ENCODE measurements at regions of chr7 and their contacts with region 1.

Region 1: DNA sequence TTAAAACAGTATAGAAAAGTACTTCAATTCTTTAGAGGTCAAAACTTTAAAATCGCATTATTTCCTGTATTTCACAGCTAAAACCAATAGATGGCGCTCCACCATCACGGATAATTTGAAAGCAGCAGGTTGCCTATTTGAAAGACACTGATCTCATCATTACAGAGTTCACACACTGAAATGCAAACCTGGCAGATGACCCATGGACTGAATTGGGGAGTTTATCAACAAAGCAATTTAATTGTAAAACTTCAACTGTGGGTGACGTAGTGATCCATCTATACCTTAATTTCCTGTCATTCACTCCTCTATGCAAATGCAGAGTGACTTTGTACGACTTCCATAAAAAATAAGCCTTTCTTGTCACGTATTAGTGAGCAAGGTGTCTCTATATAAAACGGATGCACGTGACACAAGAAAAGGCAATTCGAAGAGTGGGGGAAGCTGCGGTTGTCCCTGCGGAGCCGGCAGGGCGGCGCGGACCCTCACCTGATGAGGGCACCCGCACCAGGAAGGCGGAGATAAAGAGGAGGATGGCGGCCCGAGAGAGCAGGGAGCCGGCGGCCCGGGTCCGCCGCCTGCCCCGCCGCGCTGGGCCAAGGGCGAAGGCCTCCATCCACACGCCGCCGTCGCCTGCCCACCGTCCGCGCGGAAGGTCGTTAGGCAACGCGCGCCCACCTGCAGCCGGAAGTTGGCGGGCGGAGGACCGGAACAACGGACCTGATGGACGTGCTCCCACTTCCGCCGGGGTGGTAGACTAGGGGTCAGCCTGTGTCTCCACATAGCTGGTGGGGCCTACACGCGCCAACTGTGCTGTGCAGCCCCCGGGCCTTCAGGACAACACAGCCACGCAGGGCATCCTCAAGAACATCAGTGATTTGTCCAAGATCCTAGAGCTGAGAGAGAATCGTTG is at the start of gene ZPBP:
- DNase-seq: peak; percentile 7
- ATAC-seq: peak; percentile 42
- H3K4me3 ChIP-seq: no peak within 1 kb of the TSS
- H3K27ac ChIP-seq: no peak within 1 kb of the TSS
- H3K4me1 ChIP-seq: no peaks in the 10 kb centered on the region
- H3K27me3 ChIP-seq: no peaks in the 10 kb centered on the region
- CTCF ChIP-seq: peak; percentile 45 to 83 (median 62); a peak in 5 of 6 replicates
- POLR2A ChIP-seq: no peak
- RAD21 ChIP-seq: peak; percentile 80
- total RNA-seq, gene ZPBP: not detected

Region 2: DNA sequence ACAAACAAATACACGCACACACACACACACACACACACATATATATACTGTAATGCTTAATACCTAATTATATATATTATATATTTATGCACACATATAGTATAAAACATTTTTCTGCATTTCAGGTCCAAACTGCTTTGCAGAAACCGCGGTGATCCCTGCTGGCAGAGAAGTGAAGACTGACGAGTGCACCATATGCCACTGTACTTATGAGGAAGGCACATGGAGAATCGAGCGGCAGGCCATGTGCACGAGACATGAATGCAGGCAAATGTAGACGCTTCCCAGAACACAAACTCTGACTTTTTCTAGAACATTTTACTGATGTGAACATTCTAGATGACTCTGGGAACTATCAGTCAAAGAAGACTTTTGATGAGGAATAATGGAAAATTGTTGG is 180.9 kb before region 1 on chr7:
- CTCF ChIA-PET with region 1: no interaction called
- POLR2A ChIA-PET with region 1: no interaction called
- RAD21 ChIA-PET with region 1: no interaction called
- intact Hi-C with region 1: no loop called
- DNase-seq: no peak
- ATAC-seq: no peak
- H3K4me3 ChIP-seq: no peak overlapping the region
- H3K27ac ChIP-seq: no peak overlapping the region
- H3K4me1 ChIP-seq: no peaks in the 10 kb centered on the region
- H3K27me3 ChIP-seq: no peaks in the 10 kb centered on the region
- CTCF ChIP-seq: no peak
- POLR2A ChIP-seq: no peak
- RAD21 ChIP-seq: no peak

Region 3: DNA sequence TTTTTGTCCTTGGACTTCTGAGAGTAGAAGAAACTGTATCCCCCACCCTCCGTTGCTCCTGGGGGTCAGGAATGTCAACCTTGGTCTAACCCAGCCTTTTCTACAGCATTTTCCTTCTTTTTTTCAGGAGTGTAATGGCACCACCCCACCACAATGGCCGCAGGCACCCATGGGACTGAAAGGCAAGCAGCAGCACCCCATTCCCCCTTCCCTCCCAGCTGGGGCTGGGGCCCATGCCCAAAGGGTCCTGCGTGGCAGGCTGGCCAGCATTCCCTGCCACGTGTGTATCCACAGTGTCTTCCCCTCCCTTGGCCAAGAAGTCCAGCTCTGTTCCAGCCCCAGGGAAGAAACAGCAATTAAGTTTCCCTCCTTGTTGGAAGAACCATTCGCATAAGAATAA is 106.6 kb before region 1 on chr7:
- CTCF ChIA-PET with region 1: no interaction called
- POLR2A ChIA-PET with region 1: no interaction called
- RAD21 ChIA-PET with region 1: no interaction called
- intact Hi-C with region 1: no loop called
- DNase-seq: no peak
- ATAC-seq: no peak
- H3K4me3 ChIP-seq: no peak overlapping the region
- H3K27ac ChIP-seq: no peak overlapping the region
- H3K4me1 ChIP-seq: no peaks in the 10 kb centered on the region
- H3K27me3 ChIP-seq: no peaks in the 10 kb centered on the region
- CTCF ChIP-seq: no peak
- POLR2A ChIP-seq: no peak
- RAD21 ChIP-seq: no peak

Region 4: DNA sequence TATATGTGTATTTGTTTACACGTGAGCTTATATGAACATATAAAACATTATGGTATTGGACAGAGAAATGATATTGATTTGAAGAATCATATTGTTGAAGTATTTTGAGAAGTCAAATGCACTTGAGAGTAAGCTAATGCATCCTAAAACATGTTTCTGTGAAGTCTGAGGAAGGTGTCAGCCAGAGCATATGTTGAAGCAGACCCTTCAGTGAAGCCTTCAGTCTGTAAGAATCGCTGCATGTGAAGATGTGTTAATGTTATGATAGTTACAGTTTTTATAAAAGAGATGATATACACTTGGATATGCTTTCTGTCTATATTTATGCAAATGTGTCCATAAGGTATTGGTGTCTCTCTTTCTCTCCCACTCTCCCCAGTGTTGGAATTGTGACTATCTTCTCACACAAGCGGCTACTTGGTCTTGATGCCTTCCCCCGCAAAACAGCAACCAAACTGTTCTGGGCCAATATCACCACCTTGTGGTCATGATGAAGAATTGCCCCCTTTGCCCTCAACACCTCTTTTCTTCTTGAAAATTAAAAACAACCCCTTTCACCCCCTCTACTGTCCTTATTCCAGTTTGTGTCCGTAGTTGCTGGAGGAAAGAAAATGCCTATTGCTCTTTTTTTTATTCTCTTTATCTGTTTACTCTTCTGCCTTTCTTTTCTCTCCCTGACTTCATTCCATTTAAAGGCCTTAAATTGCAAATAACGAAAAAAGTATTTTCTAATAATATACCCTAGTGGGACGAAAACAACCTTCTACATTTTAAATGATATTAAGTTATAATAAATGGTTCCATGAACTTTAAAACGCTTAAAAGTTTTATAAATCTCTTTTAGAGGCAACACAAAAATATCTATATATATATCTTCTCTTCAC is 276.6 kb after region 1 on chr7:
- CTCF ChIA-PET with region 1: interaction called, 3 read pairs
- POLR2A ChIA-PET with region 1: no interaction called
- RAD21 ChIA-PET with region 1: no interaction called
- intact Hi-C with region 1: loop called (anchors 1 kb)
- DNase-seq: peak; percentile 50
- ATAC-seq: peak; percentile 66
- H3K4me3 ChIP-seq: no peak overlapping the region
- H3K27ac ChIP-seq: no peak overlapping the region
- H3K4me1 ChIP-seq: no peaks in the 10 kb centered on the region
- H3K27me3 ChIP-seq: 0 out of 2 replicates have a peak, but pooled peaks cover 2% of the 10 kb centered on the region
- CTCF ChIP-seq: peak; percentile 70 to 75 (median 73)
- POLR2A ChIP-seq: no peak
- RAD21 ChIP-seq: peak; percentile 74

Region 5: DNA sequence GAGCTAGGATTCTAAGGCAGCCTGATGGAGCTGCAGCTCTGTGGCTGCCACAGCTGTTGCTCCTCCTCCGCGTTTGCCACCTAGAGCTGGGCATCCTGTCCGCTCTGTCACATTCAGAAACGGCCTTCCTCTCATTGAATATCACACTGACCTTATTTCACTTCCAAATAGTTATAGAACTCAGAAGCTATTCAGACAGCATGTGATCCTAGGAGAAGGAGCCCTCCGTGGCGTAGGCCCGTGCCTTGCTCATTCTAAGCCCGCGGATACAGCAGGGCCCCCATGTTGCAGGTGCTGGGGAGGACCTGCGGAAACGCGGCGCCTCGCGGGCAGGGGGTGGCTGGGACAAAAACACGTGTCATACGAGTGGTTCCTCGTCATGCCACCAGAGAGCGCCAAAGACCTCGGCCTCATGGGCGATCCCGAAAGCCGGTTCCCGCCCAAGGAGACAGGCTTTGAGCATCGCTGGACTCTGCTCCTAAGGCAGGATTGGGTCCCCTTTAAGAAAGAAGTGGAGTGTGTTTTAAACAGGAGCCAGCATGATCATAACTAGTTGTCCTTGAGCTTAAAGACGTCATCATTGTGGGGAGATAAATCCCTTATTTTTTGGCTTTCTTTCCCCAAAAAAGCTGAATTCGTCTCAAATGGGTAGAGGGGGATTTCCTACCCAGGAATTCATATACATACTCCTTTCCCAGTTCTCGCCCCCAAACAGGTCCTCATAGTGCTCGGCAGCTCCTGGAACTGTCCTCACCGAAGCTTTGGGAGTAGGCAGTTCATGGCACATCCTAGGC is 375.2 kb after region 1 on chr7:
- CTCF ChIA-PET with region 1: interaction called, 5 read pairs
- POLR2A ChIA-PET with region 1: no interaction called
- RAD21 ChIA-PET with region 1: no interaction called
- intact Hi-C with region 1: loop called (anchors 1 kb)
- DNase-seq: peak; percentile 52
- ATAC-seq: peak; percentile 93
- H3K4me3 ChIP-seq: no peak overlapping the region
- H3K27ac ChIP-seq: no peak overlapping the region
- H3K4me1 ChIP-seq: peaks cover 2 to 5% of the 10 kb centered on the region in 2 experiments; a peak in 3 of 4 replicates
- H3K27me3 ChIP-seq: no peaks in the 10 kb centered on the region
- CTCF ChIP-seq: peak; percentile 78 to 85 (median 82)
- POLR2A ChIP-seq: no peak
- RAD21 ChIP-seq: peak; percentile 97

Region 6: GRCh38 chr7:51141451-51142003 is 1048.7 kb after region 1 on chr7:
- CTCF ChIA-PET with region 1: interaction called, 7 read pairs
- POLR2A ChIA-PET with region 1: no interaction called
- RAD21 ChIA-PET with region 1: no interaction called
- intact Hi-C with region 1: loop called (anchors 5 kb)
- DNase-seq: no peak
- ATAC-seq: peak; percentile 46; the same call in 1 of the 2 replicates
- H3K4me3 ChIP-seq: no peak overlapping the region
- H3K27ac ChIP-seq: no peak overlapping the region
- H3K4me1 ChIP-seq: peaks cover 8 to 12% of the 10 kb centered on the region in 2 experiments
- H3K27me3 ChIP-seq: no peaks in the 10 kb centered on the region
- CTCF ChIP-seq: peak; percentile 44 to 60 (median 47); a peak in 5 of 6 replicates
- POLR2A ChIP-seq: no peak
- RAD21 ChIP-seq: peak; percentile 76

Region 7: GRCh38 chr7:51430480-51431086 is 1337.7 kb after region 1 on chr7:
- CTCF ChIA-PET with region 1: interaction called, 4 read pairs
- POLR2A ChIA-PET with region 1: no interaction called
- RAD21 ChIA-PET with region 1: no interaction called
- intact Hi-C with region 1: loop called (anchors 5 kb)
- DNase-seq: peak; percentile 34
- ATAC-seq: peak; percentile 70
- H3K4me3 ChIP-seq: no peak overlapping the region
- H3K27ac ChIP-seq: no peak overlapping the region
- H3K4me1 ChIP-seq: no peaks in the 10 kb centered on the region
- H3K27me3 ChIP-seq: no peaks in the 10 kb centered on the region
- CTCF ChIP-seq: peak; percentile 39 to 88 (median 64); a peak in 5 of 6 replicates
- POLR2A ChIP-seq: no peak
- RAD21 ChIP-seq: peak; percentile 85